ENCODE measurements at regions of chr13 and their contacts with region 1.

Region 1: GRCh38 chr13:50911937-50912795 is 2.6 kb downstream of the RNASEH2B start:
- DNase-seq: peak; percentile 78
- H3K4me3 ChIP-seq: no peak overlapping the region
- H3K27ac ChIP-seq: no peak overlapping the region
- H3K4me1 ChIP-seq: peaks cover 29% of the 10 kb centered on the region
- H3K27me3 ChIP-seq: no peaks in the 10 kb centered on the region
- CTCF ChIP-seq: peak; percentile 83 to 86
- POLR2A ChIP-seq: no peak

Region 2: DNA sequence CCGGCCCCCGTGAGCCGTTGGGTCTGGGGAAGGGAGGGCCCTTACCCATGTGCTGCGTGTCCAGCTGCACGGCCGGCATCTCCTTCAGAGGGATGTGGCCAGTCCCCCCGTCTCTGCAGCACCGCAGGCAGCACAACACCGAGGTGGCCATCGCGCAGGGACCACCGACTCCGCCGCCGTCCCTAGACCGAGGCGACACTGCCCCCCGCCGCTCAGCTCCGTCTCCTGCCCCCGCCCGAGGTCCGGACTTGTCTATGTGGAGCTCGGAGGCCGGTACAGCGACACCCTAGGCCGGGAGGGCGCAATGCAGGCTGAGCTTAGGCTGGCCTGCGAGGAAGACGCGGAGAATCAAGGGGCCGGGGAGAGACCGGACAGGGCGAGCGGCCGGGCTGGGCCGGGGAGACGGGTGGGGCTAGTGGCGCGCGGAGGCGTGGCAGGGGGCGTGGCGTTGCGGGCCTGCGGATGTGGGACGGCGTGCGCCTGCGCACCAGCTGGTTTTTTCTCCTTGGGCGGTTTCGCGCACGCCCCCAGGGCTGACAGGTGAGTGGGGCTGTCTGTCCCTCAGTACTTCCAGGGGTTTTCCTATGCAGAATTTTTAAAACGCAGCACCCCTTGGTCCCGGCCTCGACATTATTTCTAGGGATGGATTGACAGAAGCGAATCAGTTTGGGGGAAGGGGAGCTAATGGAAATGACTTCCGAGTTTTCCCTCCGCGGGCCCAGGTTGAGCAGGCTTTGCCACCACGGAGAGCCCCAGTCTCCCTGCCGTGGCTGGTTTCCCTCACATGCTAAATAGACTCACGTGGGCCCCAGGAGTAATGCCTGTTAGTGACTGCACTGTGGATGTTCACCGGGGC is 975.9 kb before region 1 on chr13 and contains the start of gene SPRYD7:
- CTCF ChIA-PET with region 1: interaction called, 7 read pairs
- POLR2A ChIA-PET with region 1: no interaction called
- dilution Hi-C with region 1: no loop called
- intact Hi-C with region 1: loop called (anchors 1 kb)
- DNase-seq: peak; percentile 99
- H3K4me3 ChIP-seq: peak within 1 kb of the TSS; percentile 69 to 82 (median 79)
- H3K27ac ChIP-seq: peak within 1 kb of the TSS; percentile 21
- H3K4me1 ChIP-seq: peaks cover 8% of the 10 kb centered on the region
- H3K27me3 ChIP-seq: no peaks in the 10 kb centered on the region
- CTCF ChIP-seq: peak; percentile 90 to 95
- POLR2A ChIP-seq: peak; percentile 70
- total RNA-seq, gene SPRYD7: 7.0 and 7.5 TPM in 2 replicates

Region 3: DNA sequence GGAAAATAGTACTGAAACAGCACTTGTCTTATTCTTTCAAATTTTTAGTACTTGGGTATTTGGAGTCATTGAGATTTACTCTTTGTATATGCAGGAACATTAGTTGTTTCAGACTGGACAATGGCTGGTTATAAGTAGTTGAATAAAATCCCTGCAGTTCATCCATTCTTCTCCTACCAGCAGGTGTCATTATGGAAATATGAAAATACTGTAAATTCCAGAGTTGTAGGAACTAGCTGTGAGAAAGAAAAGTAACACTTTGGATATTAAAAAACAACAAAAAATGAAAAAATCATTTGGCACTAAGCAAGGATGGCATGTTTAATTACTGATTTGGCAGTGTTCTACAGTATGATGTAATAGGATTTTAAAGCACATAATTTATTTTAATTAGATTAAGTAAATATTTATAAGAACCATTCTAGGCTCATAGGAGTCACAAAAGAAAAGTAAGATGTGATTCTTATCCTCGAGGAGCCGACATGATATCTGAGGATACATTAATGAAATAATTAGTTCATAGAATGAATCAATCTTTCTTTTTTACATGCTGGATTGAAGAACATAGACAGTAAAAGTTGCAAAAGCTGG is 741.6 kb before region 1 on chr13:
- CTCF ChIA-PET with region 1: interaction called, 13 read pairs
- POLR2A ChIA-PET with region 1: no interaction called
- dilution Hi-C with region 1: no loop called
- intact Hi-C with region 1: loop called (anchors 10 kb)
- DNase-seq: peak; percentile 69
- H3K4me3 ChIP-seq: no peak overlapping the region
- H3K27ac ChIP-seq: no peak overlapping the region
- H3K4me1 ChIP-seq: no peaks in the 10 kb centered on the region
- H3K27me3 ChIP-seq: no peaks in the 10 kb centered on the region
- CTCF ChIP-seq: peak; percentile 8 to 24
- POLR2A ChIP-seq: no peak

Region 4: GRCh38 chr13:50801087-50801931 is 110.9 kb before region 1 on chr13:
- CTCF ChIA-PET with region 1: interaction called, 17 read pairs
- POLR2A ChIA-PET with region 1: no interaction called
- dilution Hi-C with region 1: no loop called
- intact Hi-C with region 1: loop called (anchors 5 kb)
- DNase-seq: peak; percentile 75
- H3K4me3 ChIP-seq: no peak overlapping the region
- H3K27ac ChIP-seq: no peak overlapping the region
- H3K4me1 ChIP-seq: peaks cover 4% of the 10 kb centered on the region
- H3K27me3 ChIP-seq: no peaks in the 10 kb centered on the region
- CTCF ChIP-seq: peak; percentile 71 to 72
- POLR2A ChIP-seq: no peak

Region 5: DNA sequence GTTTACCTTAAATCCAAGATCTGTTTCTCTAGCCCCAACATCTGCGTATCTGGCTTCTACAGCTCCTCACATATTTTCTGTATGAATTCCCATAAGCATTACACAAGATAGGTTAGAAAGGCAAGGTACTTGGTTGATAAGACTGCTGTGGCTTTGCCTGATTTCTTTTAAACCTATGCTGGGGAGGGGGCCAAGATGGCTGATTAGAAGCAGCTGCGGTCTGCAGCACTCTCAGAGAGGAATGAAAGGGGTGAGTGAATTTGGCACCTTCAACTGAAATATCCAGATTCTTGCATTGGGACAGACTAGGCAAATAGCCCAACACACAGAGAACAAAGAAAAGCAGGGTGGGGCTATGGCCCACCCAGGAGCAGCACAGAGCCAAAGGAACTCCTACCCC is 56.5 kb before region 1 on chr13:
- CTCF ChIA-PET with region 1: no interaction called
- POLR2A ChIA-PET with region 1: no interaction called
- dilution Hi-C with region 1: no loop called
- intact Hi-C with region 1: no loop called
- DNase-seq: no peak
- H3K4me3 ChIP-seq: no peak overlapping the region
- H3K27ac ChIP-seq: no peak overlapping the region
- H3K4me1 ChIP-seq: no peaks in the 10 kb centered on the region
- H3K27me3 ChIP-seq: peaks cover 0 to 8% of the 10 kb centered on the region in 2 experiments
- CTCF ChIP-seq: no peak
- POLR2A ChIP-seq: no peak

Region 6: DNA sequence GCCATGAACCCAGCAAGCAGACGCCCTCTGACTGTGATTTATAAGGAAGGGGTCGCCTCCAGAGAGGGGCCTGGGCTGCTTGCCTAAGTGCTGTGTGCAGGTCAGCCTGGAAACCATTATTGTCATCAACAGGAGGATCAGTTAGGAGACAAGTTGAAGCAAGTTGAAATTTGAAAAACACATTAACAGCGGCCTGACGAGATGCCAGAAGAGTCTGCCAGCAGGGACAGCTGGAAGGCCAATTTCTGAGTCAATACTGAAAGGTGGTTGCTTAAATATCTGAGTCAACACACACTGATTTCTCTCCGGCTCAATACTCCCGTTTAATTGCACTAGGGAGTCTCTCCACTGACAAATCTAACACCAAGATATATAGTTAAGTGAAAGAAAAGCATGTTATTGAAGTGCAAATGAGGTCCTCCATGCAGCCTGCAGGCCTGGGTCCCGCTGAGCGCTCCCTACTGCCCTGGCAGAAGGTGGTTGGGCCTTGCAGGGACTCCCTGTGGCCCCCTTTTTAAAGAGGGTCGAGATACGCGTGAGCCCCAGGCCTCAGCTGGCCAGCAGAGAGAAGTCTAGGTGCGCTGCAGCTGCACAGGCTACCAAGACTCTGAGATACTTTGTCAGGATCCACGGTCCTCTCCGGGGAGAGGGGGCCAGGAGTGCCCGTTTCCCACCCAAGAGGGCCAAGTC is 88.5 kb after region 1 on chr13:
- CTCF ChIA-PET with region 1: no interaction called
- POLR2A ChIA-PET with region 1: no interaction called
- dilution Hi-C with region 1: no loop called
- intact Hi-C with region 1: no loop called
- DNase-seq: no peak
- H3K4me3 ChIP-seq: no peak overlapping the region
- H3K27ac ChIP-seq: no peak overlapping the region
- H3K4me1 ChIP-seq: no peaks in the 10 kb centered on the region
- H3K27me3 ChIP-seq: peaks cover 3 to 6% of the 10 kb centered on the region in 2 experiments
- CTCF ChIP-seq: no peak
- POLR2A ChIP-seq: no peak

Region 7: DNA sequence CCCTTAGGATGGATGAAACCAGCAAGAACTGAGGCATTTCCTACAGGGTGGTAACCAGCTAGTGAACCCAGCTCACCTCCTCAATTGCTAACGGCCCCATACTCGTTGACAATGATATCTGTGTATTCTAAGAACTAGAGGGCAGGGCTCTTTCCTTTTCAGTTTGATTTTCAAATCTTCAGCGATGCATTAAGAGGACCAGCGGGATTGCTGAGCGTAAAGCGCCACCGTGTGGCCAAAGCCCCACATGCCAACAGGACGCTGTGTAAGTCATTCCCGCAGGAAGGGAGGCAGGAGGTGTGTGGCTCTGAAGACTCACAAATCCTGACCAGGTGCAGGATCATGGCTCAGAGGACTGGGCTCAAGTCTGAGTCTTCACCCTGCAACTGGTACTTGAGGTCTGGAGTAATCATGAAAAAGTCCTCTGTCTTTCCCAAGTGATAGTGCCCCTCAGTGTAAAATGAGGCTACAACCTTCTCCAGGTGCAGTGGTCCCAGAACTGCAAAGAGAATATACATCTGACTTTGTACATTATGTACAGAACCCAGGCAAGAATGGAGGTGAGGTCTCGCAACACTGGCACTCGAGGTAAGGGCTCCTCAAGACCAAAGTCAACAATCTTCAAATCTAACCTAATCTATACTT is 158.0 kb after region 1 on chr13:
- CTCF ChIA-PET with region 1: interaction called, 5 read pairs
- POLR2A ChIA-PET with region 1: no interaction called
- dilution Hi-C with region 1: no loop called
- intact Hi-C with region 1: loop called (anchors 1 kb)
- DNase-seq: peak; percentile 76
- H3K4me3 ChIP-seq: no peak overlapping the region
- H3K27ac ChIP-seq: no peak overlapping the region
- H3K4me1 ChIP-seq: peaks cover 11% of the 10 kb centered on the region
- H3K27me3 ChIP-seq: peaks cover 3 to 9% of the 10 kb centered on the region in 2 experiments
- CTCF ChIP-seq: peak; percentile 92 to 94
- POLR2A ChIP-seq: no peak